H1 (cell line): ENCODE measurements at regions of chr19 and their contacts with region 1.

Region 1: DNA sequence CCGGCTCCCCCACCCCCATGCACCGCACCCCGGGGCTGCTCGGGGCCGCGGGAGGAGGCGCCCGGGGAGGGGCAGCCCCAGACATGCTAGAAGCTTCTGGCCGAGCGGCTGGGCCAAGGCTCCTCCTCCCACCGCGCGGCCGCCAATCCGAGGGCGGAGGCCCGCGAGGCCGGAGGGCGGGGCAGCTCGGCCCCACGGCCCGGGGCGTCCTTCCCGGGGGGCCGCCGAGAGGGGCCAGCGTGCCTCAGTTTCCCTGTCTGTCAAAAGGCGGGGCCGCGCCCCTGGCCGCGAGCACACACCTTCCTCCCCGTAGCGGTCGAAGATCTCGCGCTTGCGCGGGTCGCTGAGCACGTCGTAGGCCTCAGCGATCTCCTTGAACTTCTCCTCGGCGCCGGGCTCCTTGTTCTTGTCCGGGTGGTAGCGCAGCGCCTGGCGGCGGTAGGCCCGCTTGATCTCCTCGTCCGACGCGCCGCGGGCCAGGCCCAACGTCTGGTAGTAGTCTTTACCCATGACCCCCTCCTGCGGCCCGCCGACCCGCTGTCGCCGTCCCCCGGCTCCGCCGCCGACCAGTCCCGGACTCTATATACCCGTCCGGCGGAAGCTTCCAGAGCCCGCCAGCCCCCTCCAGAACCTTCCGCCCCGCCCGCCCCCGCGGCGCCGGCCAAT is at the start of gene DNAJB1:
- DNase-seq: peak in 1 of 2 experiments; percentile 80
- H3K4me3 ChIP-seq: peak within 1 kb of the TSS; percentile 76 to 95 (median 88)
- H3K27ac ChIP-seq: peak within 1 kb of the TSS; percentile 82
- H3K4me1 ChIP-seq: peaks cover 0 to 8% (median 4%) of the 10 kb centered on the region in 4 experiments; a peak in 3 of 7 replicates
- H3K27me3 ChIP-seq: no peaks in the 10 kb centered on the region
- CTCF ChIP-seq: no peak
- EP300 ChIP-seq: no peak
- POLR2A ChIP-seq: peak; percentile 91 to 94
- RAD21 ChIP-seq: no peak
- total RNA-seq, gene DNAJB1: 62.6 and 62.9 TPM in 2 replicates

Region 2: GRCh38 chr19:14472202-14472938 is 45.6 kb before region 1 on chr19:
- CTCF ChIA-PET with region 1: interaction called, 6 read pairs
- POLR2A ChIA-PET with region 1: interaction called, 13 read pairs
- DNase-seq: peak in 1 of 2 experiments; percentile 98
- H3K4me3 ChIP-seq: peak overlapping the region; percentile 29 to 62 (median 40)
- H3K27ac ChIP-seq: no peak overlapping the region; the same call in 1 of the 2 replicates
- H3K4me1 ChIP-seq: peaks cover 0 to 21% (median 15%) of the 10 kb centered on the region in 4 experiments; a peak in 6 of 7 replicates
- H3K27me3 ChIP-seq: no peaks in the 10 kb centered on the region
- CTCF ChIP-seq: peak; percentile 80 to 90 (median 84)
- EP300 ChIP-seq: no peak
- POLR2A ChIP-seq: no peak
- RAD21 ChIP-seq: peak; percentile 30 to 56; a peak in 3 of 4 replicates

Region 3: DNA sequence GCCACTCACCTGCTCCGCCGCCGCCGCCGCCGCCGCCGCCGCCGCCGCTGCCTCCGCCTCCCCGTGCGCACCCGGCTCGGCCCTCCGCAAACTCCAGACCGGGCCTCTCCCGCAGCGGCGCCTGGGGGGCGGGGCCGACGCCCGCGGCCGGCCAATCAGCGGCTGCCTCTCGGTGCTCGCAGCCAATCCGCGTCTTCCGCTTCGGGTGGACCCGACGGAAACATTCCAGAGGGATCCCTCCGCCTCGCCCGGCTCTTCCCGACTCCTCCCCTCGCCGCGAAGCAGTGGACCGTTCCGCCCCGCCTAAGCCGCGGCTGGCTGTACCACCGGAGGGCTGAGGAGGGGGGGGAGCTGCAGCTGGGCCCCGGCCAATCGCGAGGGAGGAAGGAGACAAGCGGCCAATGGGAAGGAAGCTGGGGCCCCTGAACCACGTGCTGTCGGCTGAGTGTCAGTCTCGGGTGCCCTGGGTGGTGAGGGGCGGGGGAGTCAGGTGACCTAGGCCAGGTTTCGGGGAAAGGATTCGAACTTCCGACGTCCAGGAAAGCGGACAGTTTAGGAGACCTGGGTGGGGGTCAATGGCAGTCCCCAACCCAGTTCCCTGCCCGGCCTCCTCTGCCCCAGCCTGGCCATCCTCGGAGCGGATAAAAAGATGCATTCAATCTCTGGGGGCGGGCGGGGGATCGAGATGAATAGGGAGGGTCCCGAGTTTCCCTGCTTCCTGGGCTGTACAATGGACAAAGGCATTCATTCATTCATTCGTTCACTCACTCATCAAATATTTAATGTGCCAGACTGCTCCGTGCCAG is 21.7 kb before region 1 on chr19 and contains the start of gene GIPC1:
- CTCF ChIA-PET with region 1: interaction called, 3 read pairs
- POLR2A ChIA-PET with region 1: interaction called, 19 read pairs
- DNase-seq: peak; percentile 95 to 97
- H3K4me3 ChIP-seq: peak within 1 kb of the TSS; percentile 46 to 80 (median 69)
- H3K27ac ChIP-seq: peak within 1 kb of the TSS; percentile 37; the same call in 1 of the 2 replicates
- H3K4me1 ChIP-seq: peaks cover 0 to 13% (median 6%) of the 10 kb centered on the region in 4 experiments; a peak in 5 of 7 replicates
- H3K27me3 ChIP-seq: no peaks in the 10 kb centered on the region
- CTCF ChIP-seq: no peak
- EP300 ChIP-seq: peak in 1 of 2 experiments; percentile 100; a peak in 2 of 3 replicates
- POLR2A ChIP-seq: no peak
- RAD21 ChIP-seq: no peak
- total RNA-seq, gene GIPC1: 65.6 and 68.3 TPM in 2 replicates

Region 4: DNA sequence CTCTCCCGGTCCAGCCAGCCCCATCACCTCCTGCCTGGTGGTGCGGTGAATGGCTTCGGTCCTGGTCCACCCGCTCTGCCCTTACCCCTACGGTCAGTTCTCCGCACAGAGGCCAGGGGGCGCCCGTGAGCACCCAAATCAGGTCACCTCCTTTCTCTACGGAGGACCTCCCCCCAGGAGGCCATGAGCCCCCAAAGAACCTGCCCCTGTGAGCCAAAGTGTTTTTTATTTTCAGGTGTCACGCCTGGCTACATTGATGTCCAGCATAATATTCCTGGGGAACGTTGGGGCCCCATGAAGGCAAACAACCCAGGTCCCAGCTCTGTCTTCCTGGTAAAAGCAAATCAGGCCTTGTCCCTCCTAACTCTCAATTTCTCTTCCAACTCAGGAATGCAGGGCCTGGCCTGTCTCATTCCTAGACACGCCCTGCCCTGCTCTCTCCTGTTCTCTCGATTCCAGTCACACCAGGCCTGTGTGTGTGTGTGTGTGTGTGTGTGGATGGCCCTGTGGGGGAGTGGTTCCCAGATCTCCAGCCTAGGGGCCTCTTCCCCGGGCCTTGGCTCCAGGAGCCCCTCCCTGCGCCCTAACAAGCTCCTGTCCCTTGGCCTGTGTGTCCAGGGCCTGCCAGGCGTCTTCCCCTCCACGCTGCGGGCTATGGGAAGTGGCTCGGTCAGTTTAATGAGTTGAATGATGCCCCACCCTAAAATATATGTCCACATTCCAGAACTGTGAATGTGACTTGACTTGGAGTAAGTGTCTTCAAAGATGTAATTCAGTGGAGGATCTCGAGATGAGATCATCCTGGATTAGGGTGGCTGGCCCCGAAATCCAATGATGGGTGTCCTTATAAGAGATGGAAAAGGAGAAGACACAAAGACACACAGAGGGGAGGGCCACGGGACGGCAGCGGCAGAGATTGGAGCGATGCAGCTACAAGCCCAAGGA is 12.2 kb before region 1 on chr19:
- CTCF ChIA-PET with region 1: interaction called, 14 read pairs
- POLR2A ChIA-PET with region 1: interaction called, 30 read pairs
- DNase-seq: peak in 1 of 2 experiments; percentile 97
- H3K4me3 ChIP-seq: no peak overlapping the region
- H3K27ac ChIP-seq: peak overlapping the region; percentile 37; the same call in 1 of the 2 replicates
- H3K4me1 ChIP-seq: peaks cover 0 to 4% (median 2%) of the 10 kb centered on the region in 4 experiments; a peak in 3 of 7 replicates
- H3K27me3 ChIP-seq: no peaks in the 10 kb centered on the region
- CTCF ChIP-seq: peak; percentile 75 to 92 (median 89)
- EP300 ChIP-seq: no peak
- POLR2A ChIP-seq: no peak
- RAD21 ChIP-seq: peak in 1 of 2 experiments; percentile 47; a peak in 3 of 4 replicates

Region 5: GRCh38 chr19:14529254-14530004 is 11.5 kb after region 1 on chr19 and contains the start of gene TECR:
- CTCF ChIA-PET with region 1: no interaction called
- POLR2A ChIA-PET with region 1: interaction called, 16 read pairs
- DNase-seq: peak; percentile 100
- H3K4me3 ChIP-seq: peak within 1 kb of the TSS; percentile 75 to 100 (median 92)
- H3K27ac ChIP-seq: peak within 1 kb of the TSS; percentile 80
- H3K4me1 ChIP-seq: peaks cover 0 to 2% (median 1%) of the 10 kb centered on the region in 4 experiments; a peak in 3 of 7 replicates
- H3K27me3 ChIP-seq: no peaks in the 10 kb centered on the region
- CTCF ChIP-seq: 0 out of 4 replicates have a peak, but pooled peaks of 1 of the 3 experiments have one; percentile 0
- EP300 ChIP-seq: no peak
- POLR2A ChIP-seq: peak; percentile 84 to 94
- RAD21 ChIP-seq: no peak
- total RNA-seq, gene TECR: 172 and 179 TPM in 2 replicates

Region 6: GRCh38 chr19:14536926-14537692 is 19.1 kb after region 1 on chr19:
- CTCF ChIA-PET with region 1: no interaction called
- POLR2A ChIA-PET with region 1: interaction called, 15 read pairs
- DNase-seq: peak; percentile 87 to 94
- H3K4me3 ChIP-seq: peak overlapping the region; percentile 33 to 51 (median 38); a peak in 7 of 8 replicates
- H3K27ac ChIP-seq: no peak overlapping the region
- H3K4me1 ChIP-seq: peaks cover 3 to 6% (median 4%) of the 10 kb centered on the region in 4 experiments; a peak in 5 of 7 replicates
- H3K27me3 ChIP-seq: no peaks in the 10 kb centered on the region; a peak in 1 of 7 replicates
- CTCF ChIP-seq: no peak
- EP300 ChIP-seq: no peak
- POLR2A ChIP-seq: no peak
- RAD21 ChIP-seq: no peak